Testis (tissue), 5 donors: ENCODE measurements at regions of chr7 and their contacts with region 1.

Region 1: GRCh38 chr7:85940798-85941197 is 702.9 kb upstream of the GRM3 start:
- DNase-seq: no peak
- H3K4me3 ChIP-seq: no peak overlapping the region
- H3K27ac ChIP-seq: no peak overlapping the region
- H3K4me1 ChIP-seq: no peaks in the 10 kb centered on the region
- H3K27me3 ChIP-seq: no peaks in the 10 kb centered on the region
- CTCF ChIP-seq: no peak
- POLR2A ChIP-seq: no peak

Region 2: DNA sequence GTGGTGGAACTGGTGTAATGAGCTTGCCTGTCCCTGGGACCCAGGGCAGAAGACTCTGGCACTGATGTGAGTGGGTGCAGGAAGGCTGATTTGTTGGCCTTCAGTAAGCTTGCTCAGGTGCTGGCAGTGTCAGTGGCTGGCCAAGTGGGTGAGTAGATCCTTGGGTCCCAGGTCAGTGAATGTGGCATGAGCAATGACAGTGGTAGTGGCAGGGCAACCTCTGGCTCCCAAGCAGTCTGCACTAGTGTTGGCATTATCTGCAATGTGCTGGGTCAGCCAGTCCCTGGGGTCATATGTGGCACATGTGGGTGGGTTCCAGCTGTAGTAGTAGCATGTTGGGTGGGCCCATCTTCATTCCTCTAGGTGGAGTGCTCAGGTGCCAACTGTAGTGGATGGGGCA is 62.1 kb after region 1 on chr7:
- intact Hi-C with region 1: loop called (anchors 10 kb)
- DNase-seq: no peak
- H3K4me3 ChIP-seq: no peak overlapping the region
- H3K27ac ChIP-seq: no peak overlapping the region
- H3K4me1 ChIP-seq: no peaks in the 10 kb centered on the region
- H3K27me3 ChIP-seq: no peaks in the 10 kb centered on the region
- CTCF ChIP-seq: no peak
- POLR2A ChIP-seq: no peak

Region 3: DNA sequence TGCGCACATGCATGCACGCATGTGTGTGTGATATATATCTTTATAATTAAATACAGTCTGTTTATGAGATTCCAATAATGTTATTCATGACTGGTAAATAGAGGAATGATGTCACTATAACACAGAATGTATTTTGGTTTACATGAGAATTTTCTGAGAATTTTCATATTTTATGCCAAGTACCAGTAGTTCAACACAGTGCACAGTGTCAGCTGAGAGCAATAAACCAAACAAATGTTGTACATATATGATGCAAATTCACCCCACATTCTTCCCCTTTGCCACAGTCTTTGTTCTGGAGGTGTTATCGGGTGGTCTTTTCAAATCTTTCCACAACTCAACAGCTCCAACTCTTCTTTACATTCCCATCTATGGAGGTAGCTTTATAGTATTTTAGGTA is 240.7 kb after region 1 on chr7:
- intact Hi-C with region 1: no loop called
- DNase-seq: no peak
- H3K4me3 ChIP-seq: no peak overlapping the region
- H3K27ac ChIP-seq: no peak overlapping the region
- H3K4me1 ChIP-seq: no peaks in the 10 kb centered on the region
- H3K27me3 ChIP-seq: no peaks in the 10 kb centered on the region
- CTCF ChIP-seq: no peak
- POLR2A ChIP-seq: no peak

Region 4: GRCh38 chr7:86823769-86824168 is 883.0 kb after region 1 on chr7:
- intact Hi-C with region 1: no loop called
- DNase-seq: no peak
- H3K4me3 ChIP-seq: no peak overlapping the region
- H3K27ac ChIP-seq: no peak overlapping the region
- H3K4me1 ChIP-seq: no peaks in the 10 kb centered on the region
- H3K27me3 ChIP-seq: no peaks in the 10 kb centered on the region
- CTCF ChIP-seq: no peak
- POLR2A ChIP-seq: no peak